Uterus (tissue), 4 donors: ENCODE measurements at regions of chr15 and their contacts with region 1.

Region 1: GRCh38 chr15:58066042-58066867 is 744 bp upstream of the ALDH1A2 start:
- DNase-seq: peak; percentile 68 to 84
- H3K4me3 ChIP-seq: peak overlapping the region; percentile 53 to 60
- H3K27ac ChIP-seq: peak overlapping the region; percentile 92 to 96
- H3K4me1 ChIP-seq: peaks cover 0 to 3% of the 10 kb centered on the region in 2 donors
- H3K27me3 ChIP-seq: no peaks in the 10 kb centered on the region
- CTCF ChIP-seq: peak; percentile 81 to 96 (median 86)
- POLR2A ChIP-seq: peak in 1 of 2 donors; percentile 54

Region 2: GRCh38 chr15:57667171-57667849 is 398.9 kb before region 1 on chr15:
- intact Hi-C with region 1: loop called (anchors 10 kb)
- DNase-seq: peak; percentile 30 to 53
- H3K4me3 ChIP-seq: no peak overlapping the region
- H3K27ac ChIP-seq: peak overlapping the region; percentile 48 to 53
- H3K4me1 ChIP-seq: no peaks in the 10 kb centered on the region
- H3K27me3 ChIP-seq: no peaks in the 10 kb centered on the region
- CTCF ChIP-seq: peak; percentile 60 to 80 (median 73)
- POLR2A ChIP-seq: no peak

Region 3: DNA sequence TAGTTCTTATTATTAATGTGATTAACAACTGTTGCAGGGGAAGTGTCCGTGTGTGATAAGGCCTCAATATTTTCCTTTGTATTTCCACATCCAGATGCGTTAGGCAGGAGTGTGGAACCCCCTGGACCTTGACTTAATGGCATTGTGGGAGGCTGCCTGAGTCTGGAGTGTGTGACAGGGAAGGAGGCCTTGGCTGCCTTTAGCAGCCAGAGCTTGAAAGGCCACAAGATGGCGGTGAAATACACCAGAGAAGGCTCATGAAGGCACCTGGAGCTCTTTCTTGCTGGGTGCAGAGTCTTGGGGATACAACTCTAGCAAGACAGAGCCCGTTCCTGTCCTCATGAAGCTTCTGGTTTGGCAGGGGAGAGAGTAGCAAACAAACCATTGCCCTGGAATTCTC is 322.8 kb before region 1 on chr15:
- intact Hi-C with region 1: loop called (anchors 10 kb)
- DNase-seq: no peak
- H3K4me3 ChIP-seq: no peak overlapping the region
- H3K27ac ChIP-seq: peak overlapping the region in 1 of 2 donors; percentile 47
- H3K4me1 ChIP-seq: peaks cover 6 to 12% of the 10 kb centered on the region in 2 donors
- H3K27me3 ChIP-seq: no peaks in the 10 kb centered on the region
- CTCF ChIP-seq: no peak
- POLR2A ChIP-seq: no peak